ENCODE measurements at regions of chr10 and their contacts with region 1.

Region 1: GRCh38 chr10:73136627-73137026 is 26.4 kb downstream of the NUDT13 start:
- DNase-seq: no peak
- H3K4me3 ChIP-seq: no peak overlapping the region
- H3K27ac ChIP-seq: no peak overlapping the region
- H3K4me1 ChIP-seq: no peaks in the 10 kb centered on the region
- H3K27me3 ChIP-seq: no peaks in the 10 kb centered on the region
- CTCF ChIP-seq: no peak
- EP300 ChIP-seq: no peak
- POLR2A ChIP-seq: no peak
- RAD21 ChIP-seq: no peak

Region 2: DNA sequence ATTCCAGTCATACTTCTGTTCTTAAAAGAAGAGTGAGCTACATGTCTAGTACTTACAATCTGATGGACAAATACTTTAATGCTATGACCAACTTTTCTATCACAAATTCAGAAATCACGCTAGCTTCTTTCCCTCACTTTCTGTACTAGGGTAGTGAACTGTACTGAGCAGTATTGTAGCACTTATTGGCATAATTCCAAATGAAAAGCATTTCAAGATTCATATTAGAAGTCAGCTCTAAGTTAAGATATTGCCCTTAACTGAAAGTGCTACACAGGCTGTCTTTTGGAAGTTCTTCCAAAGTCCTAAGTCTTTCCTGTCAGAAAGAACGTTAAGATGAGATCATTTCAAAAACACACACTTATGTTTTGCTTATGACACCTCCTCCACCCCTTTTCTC is 53.4 kb before region 1 on chr10:
- CTCF ChIA-PET with region 1: no interaction called
- POLR2A ChIA-PET with region 1: no interaction called
- DNase-seq: no peak
- H3K4me3 ChIP-seq: no peak overlapping the region
- H3K27ac ChIP-seq: no peak overlapping the region
- H3K4me1 ChIP-seq: no peaks in the 10 kb centered on the region
- H3K27me3 ChIP-seq: no peaks in the 10 kb centered on the region
- CTCF ChIP-seq: no peak
- EP300 ChIP-seq: no peak
- POLR2A ChIP-seq: no peak
- RAD21 ChIP-seq: no peak

Region 3: DNA sequence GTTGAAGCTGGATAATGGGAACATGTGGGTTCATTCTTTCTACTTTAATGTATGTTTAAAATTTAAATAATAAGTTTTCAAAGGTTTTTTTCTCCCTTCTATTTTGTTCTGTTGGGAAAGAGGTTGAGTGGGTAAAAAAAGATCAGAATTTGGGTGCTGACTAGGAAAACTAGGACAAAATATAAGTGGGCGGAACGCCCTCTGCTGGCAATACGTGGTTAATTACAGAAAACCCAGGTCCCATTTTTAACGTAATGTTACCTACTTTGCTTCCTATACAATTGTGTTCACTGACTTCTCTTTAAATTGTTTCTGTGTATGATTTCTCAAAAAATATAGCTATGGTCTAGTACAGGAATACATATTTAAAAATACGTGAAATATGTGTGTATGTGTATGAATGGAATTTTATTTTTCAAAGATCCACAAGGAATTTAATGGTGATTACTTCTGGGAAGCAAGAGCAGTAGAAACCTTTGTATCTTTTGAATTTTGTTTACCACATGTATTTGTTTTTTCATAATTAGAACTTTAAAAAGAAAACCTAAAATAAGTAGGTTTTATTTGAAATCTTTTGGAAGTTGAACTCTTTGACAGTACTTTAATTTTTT is 22.5 kb after region 1 on chr10:
- CTCF ChIA-PET with region 1: interaction called, 14 read pairs
- POLR2A ChIA-PET with region 1: no interaction called
- DNase-seq: peak; percentile 3 to 60
- H3K4me3 ChIP-seq: no peak overlapping the region
- H3K27ac ChIP-seq: no peak overlapping the region
- H3K4me1 ChIP-seq: no peaks in the 10 kb centered on the region
- H3K27me3 ChIP-seq: no peaks in the 10 kb centered on the region
- CTCF ChIP-seq: peak in 2 of 3 experiments; percentile 41 to 63; a peak in 2 of 4 replicates
- EP300 ChIP-seq: no peak
- POLR2A ChIP-seq: no peak
- RAD21 ChIP-seq: peak; percentile 50 to 60

Measured in H1 (cell line).